ENCODE measurements at regions of chr9 and their contacts with region 1.

Region 1: GRCh38 chr9:109903515-109904138 is 123.6 kb downstream of the PALM2AKAP2 start:
- DNase-seq: peak; percentile 64 to 81
- ATAC-seq: peak; percentile 80 to 95
- H3K4me3 ChIP-seq: no peak overlapping the region
- H3K27ac ChIP-seq: peak overlapping the region in 1 of 2 experiments; percentile 54; a peak in 3 of 6 replicates
- H3K4me1 ChIP-seq: peaks cover 3% of the 10 kb centered on the region; the same call in 1 of the 3 replicates
- CTCF ChIP-seq: peak; percentile 92
- EP300 ChIP-seq: no peak
- POLR2A ChIP-seq: no peak
- RAD21 ChIP-seq: peak; percentile 98 to 99

Region 2: DNA sequence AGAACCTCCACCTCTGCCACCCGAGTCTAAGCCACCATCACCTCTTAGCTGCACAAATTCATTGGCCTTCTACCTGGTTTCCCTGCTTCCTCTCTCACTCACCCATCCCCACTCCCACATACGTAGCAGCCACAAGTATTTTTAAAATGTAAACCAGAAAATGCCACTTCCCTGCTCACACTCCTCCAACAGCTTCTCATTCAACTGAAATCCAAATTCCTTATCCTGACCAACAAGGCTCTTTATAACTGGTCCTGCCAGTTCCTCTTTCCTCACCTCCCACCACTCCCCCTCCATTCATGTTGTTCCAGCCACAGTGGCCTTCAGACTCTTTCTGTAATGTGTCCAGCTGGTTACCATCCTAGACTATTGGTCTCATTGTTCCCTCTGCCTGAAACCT is 148.6 kb before region 1 on chr9:
- CTCF ChIA-PET with region 1: no interaction called
- POLR2A ChIA-PET with region 1: no interaction called
- DNase-seq: no peak
- ATAC-seq: no peak
- H3K4me3 ChIP-seq: no peak overlapping the region
- H3K27ac ChIP-seq: no peak overlapping the region
- H3K4me1 ChIP-seq: no peaks in the 10 kb centered on the region
- CTCF ChIP-seq: no peak
- EP300 ChIP-seq: no peak
- POLR2A ChIP-seq: no peak
- RAD21 ChIP-seq: no peak

Region 3: DNA sequence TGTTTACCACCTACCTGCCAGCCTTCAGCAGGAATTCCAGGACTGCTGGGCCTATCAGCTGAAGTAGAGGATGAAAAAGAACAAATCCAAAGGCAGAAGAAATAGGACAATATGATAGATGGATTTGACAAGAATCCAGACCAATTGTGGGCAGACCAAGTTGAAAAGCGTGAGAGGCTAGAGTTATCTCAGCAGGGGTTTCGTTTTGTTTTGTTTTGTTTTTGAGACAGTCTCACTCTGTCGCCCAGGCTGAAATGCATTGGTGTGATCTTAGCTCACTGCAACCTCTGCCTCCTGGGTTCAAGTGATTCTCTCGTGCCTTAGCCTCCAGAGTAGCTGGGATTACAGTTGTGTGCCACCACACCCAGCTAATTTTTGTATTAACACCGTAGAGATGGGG is 10.4 kb before region 1 on chr9:
- CTCF ChIA-PET with region 1: interaction called, 21 read pairs
- POLR2A ChIA-PET with region 1: interaction called, 4 read pairs
- DNase-seq: no peak
- ATAC-seq: no peak
- H3K4me3 ChIP-seq: no peak overlapping the region
- H3K27ac ChIP-seq: no peak overlapping the region
- H3K4me1 ChIP-seq: no peaks in the 10 kb centered on the region
- CTCF ChIP-seq: no peak
- EP300 ChIP-seq: no peak
- POLR2A ChIP-seq: no peak
- RAD21 ChIP-seq: no peak

Region 4: DNA sequence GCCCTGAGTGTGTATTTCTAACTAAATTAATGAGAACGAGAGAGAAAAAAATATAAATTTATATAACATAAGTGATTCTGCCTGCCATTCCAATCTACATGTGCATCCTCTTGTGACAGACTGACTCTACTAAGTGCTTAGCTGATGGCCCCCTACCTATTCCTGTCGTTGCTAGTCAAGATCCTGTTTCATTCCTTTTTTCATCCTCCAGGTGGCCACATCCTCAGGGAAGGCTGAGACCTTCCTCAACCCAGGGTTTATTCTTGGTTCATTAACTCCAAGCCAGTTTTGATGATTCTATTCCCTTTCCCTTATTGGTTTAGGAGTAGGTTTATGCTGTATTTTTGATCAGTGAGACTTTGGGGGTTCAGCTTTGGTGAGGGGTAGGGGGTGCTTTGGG is 103.0 kb after region 1 on chr9:
- CTCF ChIA-PET with region 1: no interaction called
- POLR2A ChIA-PET with region 1: no interaction called
- DNase-seq: no peak
- ATAC-seq: peak in 1 of 2 experiments; percentile 52; a peak in 2 of 6 replicates
- H3K4me3 ChIP-seq: no peak overlapping the region
- H3K27ac ChIP-seq: no peak overlapping the region
- H3K4me1 ChIP-seq: no peaks in the 10 kb centered on the region
- CTCF ChIP-seq: no peak
- EP300 ChIP-seq: no peak
- POLR2A ChIP-seq: no peak
- RAD21 ChIP-seq: peak in 1 of 2 experiments; percentile 13; a peak in 1 of 5 replicates

Region 5: DNA sequence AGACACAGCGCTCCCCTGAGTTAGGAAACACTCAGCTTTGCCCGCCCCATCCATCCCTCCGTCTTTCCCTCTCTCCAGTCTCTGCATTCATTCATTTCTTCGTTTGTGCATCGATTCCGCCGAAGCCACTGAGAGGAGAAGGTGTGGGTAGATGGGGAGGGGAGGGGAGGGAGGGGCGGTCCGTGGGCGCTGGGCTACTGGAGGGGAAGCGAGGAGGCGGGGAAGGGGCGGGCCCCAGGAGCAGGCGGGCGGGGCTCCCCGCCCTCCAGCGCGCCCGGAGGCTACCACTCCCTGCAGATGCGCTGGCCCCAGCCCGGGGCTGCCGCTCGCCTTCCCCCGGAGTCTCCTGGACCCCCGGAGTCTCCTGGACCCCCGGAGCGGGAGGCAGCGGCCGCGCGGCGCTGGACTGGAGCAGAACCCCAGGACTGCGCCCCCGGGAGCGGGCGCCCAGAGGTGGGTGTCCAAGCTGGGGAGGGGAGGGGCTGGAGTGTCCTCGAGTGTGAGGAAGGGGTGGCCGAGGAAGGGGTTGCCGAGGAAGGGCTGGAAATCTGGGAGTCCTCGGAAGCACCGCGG is 144.9 kb after region 1 on chr9:
- CTCF ChIA-PET with region 1: interaction called, 343 read pairs
- POLR2A ChIA-PET with region 1: interaction called, 4 read pairs
- DNase-seq: peak; percentile 47 to 55
- ATAC-seq: peak; percentile 86 to 90
- H3K4me3 ChIP-seq: peak overlapping the region; percentile 88
- H3K27ac ChIP-seq: peak overlapping the region; percentile 86 to 97
- H3K4me1 ChIP-seq: peaks cover 23% of the 10 kb centered on the region
- CTCF ChIP-seq: no peak
- EP300 ChIP-seq: no peak
- POLR2A ChIP-seq: peak; percentile 26; the same call in 1 of the 2 replicates
- RAD21 ChIP-seq: no peak

Region 6: GRCh38 chr9:110133608-110134210 is 230.1 kb after region 1 on chr9:
- CTCF ChIA-PET with region 1: interaction called, 21 read pairs
- POLR2A ChIA-PET with region 1: no interaction called
- DNase-seq: peak; percentile 53 to 59
- ATAC-seq: peak; percentile 84 to 85
- H3K4me3 ChIP-seq: no peak overlapping the region
- H3K27ac ChIP-seq: peak overlapping the region; percentile 18 to 69; a peak in 4 of 6 replicates
- H3K4me1 ChIP-seq: peaks cover 49% of the 10 kb centered on the region
- CTCF ChIP-seq: no peak
- EP300 ChIP-seq: no peak
- POLR2A ChIP-seq: no peak
- RAD21 ChIP-seq: no peak

Region 7: DNA sequence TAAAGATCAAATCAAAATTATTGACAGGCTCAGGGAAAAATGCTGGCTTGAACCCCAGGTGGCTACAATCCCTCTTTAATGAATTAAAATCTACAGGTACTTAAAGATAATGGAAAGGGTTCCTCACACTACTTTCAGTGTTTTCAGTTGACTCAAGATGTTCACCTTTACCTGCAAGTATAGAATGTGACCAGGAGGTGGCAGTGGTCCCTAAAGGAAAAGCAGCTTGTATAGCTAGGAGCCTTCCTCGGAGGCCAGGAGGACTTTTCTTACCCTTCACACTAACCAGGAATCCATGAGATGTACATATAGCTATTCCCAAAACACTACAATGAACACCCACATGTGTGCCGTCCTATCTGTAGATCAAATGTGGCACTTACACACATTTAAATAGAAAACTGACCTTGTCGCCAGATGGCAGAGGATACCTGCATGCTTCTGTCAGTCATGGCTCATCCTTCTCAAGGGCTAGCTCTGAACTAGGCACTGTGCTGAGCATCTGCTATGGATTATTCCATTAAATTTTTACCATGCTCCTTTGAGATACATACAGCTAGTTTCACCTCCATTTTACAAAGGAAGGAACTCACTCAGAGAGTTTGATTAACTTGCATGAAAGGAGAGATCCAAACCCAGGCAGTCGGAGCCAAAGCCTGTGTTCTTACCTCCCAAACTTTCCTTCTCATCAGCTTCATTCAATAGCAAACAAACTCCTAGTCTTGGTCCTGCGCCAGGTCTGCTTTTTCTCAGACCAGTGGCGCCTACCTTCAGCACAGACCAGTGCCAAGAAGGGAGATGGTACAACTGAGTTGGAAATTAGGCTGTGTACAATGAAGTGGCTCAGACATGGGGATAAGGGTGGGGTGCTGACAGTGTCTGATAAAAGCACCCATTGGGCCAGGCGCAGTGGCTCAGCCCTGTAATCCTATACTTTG is 279.9 kb after region 1 on chr9:
- CTCF ChIA-PET with region 1: interaction called, 10 read pairs
- POLR2A ChIA-PET with region 1: no interaction called
- DNase-seq: peak; percentile 79 to 82
- ATAC-seq: peak; percentile 81 to 89
- H3K4me3 ChIP-seq: no peak overlapping the region
- H3K27ac ChIP-seq: no peak overlapping the region; a peak in 1 of 6 replicates
- H3K4me1 ChIP-seq: peaks cover 29% of the 10 kb centered on the region
- CTCF ChIP-seq: peak; percentile 87
- EP300 ChIP-seq: no peak
- POLR2A ChIP-seq: no peak
- RAD21 ChIP-seq: peak; percentile 94

Region 8: GRCh38 chr9:110217656-110218099 is 314.1 kb after region 1 on chr9:
- CTCF ChIA-PET with region 1: interaction called, 16 read pairs
- POLR2A ChIA-PET with region 1: no interaction called
- DNase-seq: peak in 1 of 2 experiments; percentile 63
- ATAC-seq: peak in 1 of 2 experiments; percentile 38; a peak in 2 of 6 replicates
- H3K4me3 ChIP-seq: no peak overlapping the region
- H3K27ac ChIP-seq: peak overlapping the region; percentile 31 to 38; a peak in 1 of 6 replicates
- H3K4me1 ChIP-seq: peaks cover 6% of the 10 kb centered on the region; the same call in 2 of the 3 replicates
- CTCF ChIP-seq: peak; percentile 85
- EP300 ChIP-seq: no peak
- POLR2A ChIP-seq: no peak
- RAD21 ChIP-seq: peak; percentile 69 to 82

Measured in A549 (cell line).